GM13976 (cell line): ENCODE measurements at regions of chr10 and their contacts with region 1.

Region 1: DNA sequence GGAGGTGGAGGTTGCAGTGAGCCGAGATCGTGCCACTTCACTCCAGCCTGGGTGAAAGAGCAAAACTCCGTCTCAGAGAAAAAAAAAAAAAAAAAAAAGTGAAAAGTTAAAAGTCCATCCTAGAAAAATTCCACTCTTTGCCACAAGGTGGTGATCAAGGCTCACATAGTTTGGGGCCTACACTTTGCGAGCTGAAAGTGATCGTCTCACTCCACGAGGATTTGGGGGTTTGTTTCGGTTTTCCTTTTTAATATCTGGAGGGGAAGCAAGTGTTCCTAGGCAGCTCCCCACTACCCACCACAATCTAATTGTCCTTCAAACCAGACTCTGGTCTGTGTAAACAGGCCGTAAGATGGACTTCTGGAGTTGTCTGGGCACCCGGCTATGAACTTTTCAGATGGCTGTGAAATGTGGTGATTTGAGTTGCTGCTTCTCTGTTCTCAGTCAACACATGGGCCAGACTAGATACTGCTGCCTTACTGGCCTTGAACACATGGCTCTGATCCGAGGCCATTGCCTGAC is 27.1 kb downstream of the PRLHR start:
- DNase-seq: peak; percentile 66
- CTCF ChIP-seq: peak; percentile 51

Region 2: DNA sequence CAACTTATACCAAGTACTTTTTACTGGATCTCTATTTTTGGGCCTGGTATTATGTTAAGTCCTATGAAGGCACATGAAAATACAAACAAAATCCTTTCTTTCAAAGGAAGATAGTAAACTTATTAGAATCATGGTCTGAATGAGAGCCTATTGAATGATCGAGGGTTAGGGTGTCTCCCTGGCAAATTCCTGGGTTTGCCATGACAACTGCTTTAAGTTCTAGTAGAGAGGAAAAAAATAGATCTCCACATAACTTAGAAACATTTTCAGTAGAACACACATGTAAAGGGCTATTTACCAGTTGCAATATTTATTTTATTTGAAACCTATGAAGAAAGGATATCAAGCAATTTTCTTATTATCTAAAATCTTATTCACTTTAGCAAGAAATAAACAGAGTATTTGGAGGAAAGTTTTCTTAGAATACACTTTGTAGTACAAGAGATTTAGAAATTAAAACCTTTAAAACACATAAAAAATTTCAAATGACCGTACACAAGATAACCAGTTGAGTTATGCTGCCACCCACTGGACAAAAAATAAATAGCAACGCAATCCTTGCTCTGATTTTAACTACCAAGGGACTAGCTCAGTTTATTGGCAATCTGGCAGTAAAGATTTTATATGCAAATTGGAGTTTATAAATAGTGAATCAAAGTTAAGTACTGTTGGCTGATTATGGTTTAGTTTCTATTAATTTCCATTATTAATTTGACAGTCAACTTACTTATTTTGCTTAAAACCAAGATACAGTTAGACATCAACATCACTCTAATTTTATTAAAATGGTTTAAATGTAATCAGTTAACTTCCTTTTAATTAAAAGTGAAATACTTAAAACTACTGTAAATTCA is 152.5 kb after region 1 on chr10:
- in situ Hi-C with region 1: loop called (anchors 10 kb)
- DNase-seq: peak; percentile 44
- CTCF ChIP-seq: peak; percentile 66

Region 3: DNA sequence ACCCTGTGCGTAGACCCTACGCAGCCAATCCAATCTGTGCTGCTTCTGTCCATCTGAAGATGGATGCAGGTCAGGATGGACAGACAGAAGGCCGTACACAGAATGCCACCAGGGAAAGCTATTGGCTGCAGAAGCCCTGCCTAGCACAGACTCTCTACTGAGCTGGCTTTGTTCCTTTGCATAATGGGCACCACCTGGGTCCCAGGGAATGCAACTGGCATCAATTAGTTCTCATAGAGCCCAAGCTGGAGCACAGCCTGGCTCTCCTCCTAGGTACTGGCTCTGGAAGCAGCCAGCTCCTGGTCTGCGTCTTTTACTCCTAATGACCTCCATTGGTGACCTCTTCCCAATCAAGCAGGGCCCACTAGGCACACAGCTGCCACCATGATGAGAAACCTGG is 213.2 kb after region 1 on chr10:
- in situ Hi-C with region 1: no loop called
- DNase-seq: no peak
- CTCF ChIP-seq: no peak

Region 4: GRCh38 chr10:119445311-119445934 is 877.0 kb after region 1 on chr10:
- in situ Hi-C with region 1: loop called (anchors 25 kb)
- DNase-seq: peak; percentile 90
- CTCF ChIP-seq: peak; percentile 96